T-cell (primary cell): ENCODE measurements at regions of chr16 and their contacts with region 1.

Region 1: DNA sequence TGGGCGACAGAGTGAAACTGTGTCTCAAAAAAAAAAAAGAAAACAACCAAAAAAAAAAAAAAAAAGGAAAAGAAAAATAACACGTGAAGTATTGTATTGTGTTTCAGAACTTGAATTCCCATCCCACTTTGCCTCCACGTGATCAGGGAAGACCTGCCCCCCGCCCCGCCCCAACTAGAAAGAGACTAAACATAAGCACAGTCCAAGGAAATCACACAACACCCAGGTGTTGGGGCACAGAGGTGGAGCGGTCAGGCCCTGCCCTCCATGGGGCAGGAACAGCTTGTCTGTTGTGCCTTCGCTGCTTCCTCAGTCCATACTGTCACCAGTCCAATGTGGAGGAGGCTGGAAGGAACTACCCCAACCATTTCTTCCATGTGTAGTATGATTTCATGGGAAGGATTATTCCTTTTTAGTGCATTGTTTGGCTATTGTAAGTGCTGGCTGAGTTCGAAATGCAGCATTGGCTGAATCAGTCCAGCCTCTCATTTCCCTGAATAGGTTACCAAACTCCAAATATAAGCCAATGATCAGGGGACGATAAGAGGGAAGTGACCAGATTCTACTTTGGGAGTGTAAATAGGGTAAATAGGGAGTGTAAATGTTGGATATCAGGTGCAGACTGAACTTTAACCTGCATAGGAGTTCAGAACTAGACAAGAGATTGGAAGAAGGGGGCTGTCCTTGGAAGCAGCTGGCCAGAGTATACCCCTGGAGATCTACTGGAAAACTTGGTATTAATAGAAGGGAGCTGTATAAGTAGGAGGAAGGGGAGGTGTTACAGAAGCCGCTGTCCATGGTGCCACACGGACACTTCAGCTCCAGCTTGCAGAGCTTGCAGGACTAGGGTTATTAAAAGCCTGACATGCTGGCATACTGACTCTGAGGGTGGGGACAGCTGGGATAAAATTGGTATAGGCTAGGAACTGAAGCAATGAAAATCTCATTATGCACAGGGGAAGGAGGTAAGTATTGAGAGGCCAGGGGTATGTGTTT is 50.7 kb downstream of the TANGO6 start:
- DNase-seq: no peak
- ATAC-seq: no peak
- H3K4me3 ChIP-seq: no peak overlapping the region
- H3K4me3 Mint-ChIP-seq: no peak overlapping the region
- H3K27ac ChIP-seq: no peak overlapping the region
- H3K27ac Mint-ChIP-seq: no peak overlapping the region
- H3K4me1 ChIP-seq: no peaks in the 10 kb centered on the region
- H3K4me1 Mint-ChIP-seq: peaks cover 0 to 5% (median 4%) of the 10 kb centered on the region in 3 donors
- H3K27me3 ChIP-seq: no peaks in the 10 kb centered on the region
- H3K27me3 Mint-ChIP-seq: no peaks in the 10 kb centered on the region

Region 2: GRCh38 chr16:67951485-67951884 is 942.5 kb before region 1 on chr16:
- CTCF ChIA-PET with region 1: no interaction called
- POLR2A ChIA-PET with region 1: no interaction called
- DNase-seq: no peak
- ATAC-seq: no peak
- H3K4me3 ChIP-seq: no peak overlapping the region
- H3K4me3 Mint-ChIP-seq: no peak overlapping the region
- H3K27ac ChIP-seq: no peak overlapping the region
- H3K27ac Mint-ChIP-seq: no peak overlapping the region
- H3K4me1 ChIP-seq: peaks cover 0 to 2% of the 10 kb centered on the region in 2 experiments
- H3K4me1 Mint-ChIP-seq: peaks cover 0 to 5% (median 0%) of the 10 kb centered on the region in 3 donors
- H3K27me3 ChIP-seq: no peaks in the 10 kb centered on the region
- H3K27me3 Mint-ChIP-seq: no peaks in the 10 kb centered on the region

Region 3: DNA sequence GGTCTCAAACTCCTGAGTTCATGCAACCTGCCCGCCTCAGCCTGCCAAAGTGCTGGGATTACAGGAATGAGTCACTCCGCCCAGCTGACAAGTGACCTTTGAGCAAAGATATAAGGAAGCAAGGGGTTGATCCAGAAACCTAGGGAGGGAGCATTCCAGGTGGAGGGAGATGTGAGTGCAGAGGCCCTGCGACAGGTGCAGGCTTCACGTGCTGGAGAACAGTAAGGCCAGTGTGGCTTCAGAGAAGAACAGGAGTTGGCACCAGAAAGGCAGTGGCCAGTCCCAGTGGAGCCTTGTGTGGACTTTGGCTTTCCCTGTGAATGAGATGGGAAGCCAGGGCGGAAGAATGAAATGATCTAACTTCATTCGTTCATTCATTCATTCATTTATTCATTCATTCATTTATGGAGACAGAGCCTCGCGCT is 137.9 kb after region 1 on chr16:
- CTCF ChIA-PET with region 1: no interaction called
- POLR2A ChIA-PET with region 1: no interaction called
- DNase-seq: no peak
- ATAC-seq: no peak
- H3K4me3 ChIP-seq: no peak overlapping the region
- H3K4me3 Mint-ChIP-seq: no peak overlapping the region
- H3K27ac ChIP-seq: no peak overlapping the region
- H3K27ac Mint-ChIP-seq: no peak overlapping the region
- H3K4me1 ChIP-seq: no peaks in the 10 kb centered on the region
- H3K4me1 Mint-ChIP-seq: no peaks in the 10 kb centered on the region
- H3K27me3 ChIP-seq: no peaks in the 10 kb centered on the region
- H3K27me3 Mint-ChIP-seq: no peaks in the 10 kb centered on the region

Region 4: DNA sequence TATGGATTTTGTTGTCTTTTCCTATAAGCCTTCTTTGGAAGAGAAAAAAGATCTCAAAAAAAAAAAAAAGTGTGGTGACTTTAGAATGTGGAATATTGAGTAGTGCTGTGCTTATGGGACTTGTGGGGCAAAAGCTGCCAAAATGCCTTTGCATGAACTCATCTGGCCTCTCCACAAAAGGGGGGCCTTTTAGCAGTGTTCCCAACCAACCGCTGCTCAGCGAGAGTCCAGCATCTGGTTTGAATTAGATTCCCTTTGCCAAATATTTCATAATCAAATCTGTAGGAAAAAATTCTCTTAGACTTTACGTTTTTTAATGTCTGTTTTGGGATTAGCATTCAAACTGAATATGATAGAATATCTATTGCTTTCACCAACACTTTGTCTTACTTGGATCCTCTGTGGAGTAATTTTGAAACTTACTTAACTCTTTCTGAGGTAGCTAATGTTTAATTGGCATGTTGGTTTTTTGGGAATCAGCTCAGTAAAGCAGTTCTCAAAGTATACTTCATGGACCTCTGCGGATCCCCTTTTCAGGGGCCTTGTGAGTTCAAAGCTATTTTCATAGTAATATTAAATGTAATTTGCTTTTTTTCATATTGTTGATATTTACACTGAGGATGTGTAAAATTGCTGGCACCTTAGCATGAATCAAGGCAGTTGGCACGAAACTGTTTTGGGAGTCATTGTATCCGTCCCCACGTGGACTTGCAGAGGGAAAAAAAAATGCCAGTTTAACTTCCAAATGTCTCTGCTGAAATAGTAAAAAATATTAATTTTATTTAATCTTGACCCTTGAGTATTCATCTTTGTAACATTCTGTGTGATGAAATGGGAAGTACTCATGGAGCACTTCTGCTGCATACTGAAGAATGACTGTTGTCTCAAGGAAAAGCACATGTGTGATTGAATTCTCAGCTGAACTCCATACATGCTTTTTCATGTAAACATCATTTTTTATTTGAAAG is 382.4 kb after region 1 on chr16:
- CTCF ChIA-PET with region 1: interaction called in 1 of 2 experiments, 16 read pairs
- POLR2A ChIA-PET with region 1: no interaction called
- DNase-seq: no peak
- ATAC-seq: no peak
- H3K4me3 ChIP-seq: no peak overlapping the region
- H3K4me3 Mint-ChIP-seq: no peak overlapping the region
- H3K27ac ChIP-seq: no peak overlapping the region
- H3K27ac Mint-ChIP-seq: peak overlapping the region in 1 of 2 donors; percentile 20
- H3K4me1 ChIP-seq: no peaks in the 10 kb centered on the region
- H3K4me1 Mint-ChIP-seq: peaks cover 0 to 2% (median 0%) of the 10 kb centered on the region in 3 donors
- H3K27me3 ChIP-seq: no peaks in the 10 kb centered on the region
- H3K27me3 Mint-ChIP-seq: no peaks in the 10 kb centered on the region